WTC11 (cell line): ENCODE measurements at regions of chr17 and their contacts with region 1.

Region 1: GRCh38 chr17:31357831-31358394 is 33.6 kb upstream of the RAB11FIP4 start:
- DNase-seq: no peak
- ATAC-seq: no peak
- H3K4me3 Mint-ChIP-seq: no peak overlapping the region
- H3K27ac Mint-ChIP-seq: no peak overlapping the region
- H3K4me1 Mint-ChIP-seq: no peaks in the 10 kb centered on the region
- H3K27me3 Mint-ChIP-seq: no peaks in the 10 kb centered on the region
- CTCF ChIP-seq: no peak

Region 2: DNA sequence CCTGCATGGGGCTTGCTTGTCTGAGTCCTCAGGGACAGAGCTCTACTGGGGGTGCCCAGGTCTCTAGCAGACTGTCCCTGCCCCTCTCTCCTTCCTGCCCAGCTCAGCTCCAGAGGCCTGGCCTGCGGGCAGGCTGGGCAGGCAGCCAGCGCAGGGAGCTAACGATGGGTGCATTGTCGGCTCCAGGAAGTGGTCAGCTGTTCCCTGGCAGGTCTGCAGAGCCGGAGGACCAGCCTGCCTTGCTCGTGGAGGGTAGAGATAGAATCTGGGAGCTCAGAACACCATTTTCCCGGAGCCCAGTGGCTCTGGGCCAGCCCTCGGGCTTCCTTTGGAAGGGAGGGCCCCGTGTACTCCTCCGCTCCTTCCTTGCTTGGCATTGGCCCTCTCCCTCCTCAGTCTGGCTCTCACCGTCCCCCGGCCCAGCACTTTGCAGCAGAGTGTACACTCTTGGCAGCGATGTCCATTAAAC is 223.1 kb after region 1 on chr17:
- CTCF ChIA-PET with region 1: no interaction called
- POLR2A ChIA-PET with region 1: no interaction called
- DNase-seq: no peak
- ATAC-seq: no peak
- H3K4me3 Mint-ChIP-seq: no peak overlapping the region
- H3K27ac Mint-ChIP-seq: no peak overlapping the region; the same call in 1 of the 2 replicates
- H3K4me1 Mint-ChIP-seq: no peaks in the 10 kb centered on the region
- H3K27me3 Mint-ChIP-seq: no peaks in the 10 kb centered on the region
- CTCF ChIP-seq: no peak

Region 3: GRCh38 chr17:31869797-31870568 is 512.1 kb after region 1 on chr17:
- CTCF ChIA-PET with region 1: no interaction called
- POLR2A ChIA-PET with region 1: interaction called, 10 read pairs
- DNase-seq: no peak
- ATAC-seq: no peak
- H3K4me3 Mint-ChIP-seq: no peak overlapping the region
- H3K27ac Mint-ChIP-seq: no peak overlapping the region
- H3K4me1 Mint-ChIP-seq: no peaks in the 10 kb centered on the region
- H3K27me3 Mint-ChIP-seq: no peaks in the 10 kb centered on the region
- CTCF ChIP-seq: no peak